Right cardiac atrium (tissue), 5 donors: ENCODE measurements at regions of chr11 and their contacts with region 1.

Region 1: GRCh38 chr11:12043959-12044819 is 35.8 kb upstream of the DKK3 start:
- DNase-seq: peak; percentile 91 to 93 (median 92)
- ATAC-seq: peak; percentile 88
- H3K4me3 ChIP-seq: no peak overlapping the region
- H3K27ac ChIP-seq: peak overlapping the region; percentile 74
- H3K4me1 ChIP-seq: no peaks in the 10 kb centered on the region
- H3K27me3 ChIP-seq: no peaks in the 10 kb centered on the region

Region 2: DNA sequence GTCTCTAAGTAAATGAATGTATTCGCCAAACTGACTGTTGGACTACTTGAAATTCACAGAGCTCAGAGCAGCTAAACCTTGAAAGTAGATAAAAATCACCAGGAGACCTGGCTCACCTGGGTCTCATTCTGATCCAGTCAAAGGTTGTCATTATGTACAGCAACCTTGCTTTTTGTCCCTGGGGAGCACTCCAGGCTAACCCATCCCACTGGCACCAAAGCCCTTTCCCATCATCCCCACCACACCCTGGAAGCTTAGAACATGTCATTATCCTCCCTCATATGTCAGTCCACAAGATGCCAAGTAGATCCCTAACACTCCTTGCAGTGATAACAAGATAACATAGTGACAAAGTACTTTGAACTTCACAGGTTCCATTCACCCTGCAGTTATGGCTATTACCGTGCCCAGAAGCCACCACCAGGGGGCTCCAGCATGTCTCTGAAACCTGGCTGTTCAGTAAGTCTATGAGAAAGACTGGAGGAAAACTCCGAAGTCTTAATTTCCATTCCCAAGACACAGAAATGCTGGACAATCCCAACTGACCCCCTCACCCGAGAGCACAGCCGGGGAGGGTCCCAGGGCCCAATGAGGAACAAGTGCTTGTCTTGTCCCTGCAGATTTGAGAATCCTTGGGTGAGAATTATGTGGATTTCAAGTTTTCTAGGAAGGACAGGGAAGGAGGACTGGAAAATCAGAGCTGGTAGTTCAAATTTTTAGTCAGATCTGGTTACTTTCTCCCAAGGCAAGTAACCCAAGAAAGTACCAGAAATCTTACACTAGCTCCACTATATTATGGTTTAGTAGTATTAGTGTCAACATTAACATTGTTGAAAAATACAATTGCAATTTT is 245.4 kb before region 1 on chr11:
- intact Hi-C with region 1: loop called in 3 of 4 experiments (anchors 5 to 10 kb)
- DNase-seq: peak; percentile 85 to 95 (median 91)
- ATAC-seq: peak; percentile 91 to 92
- H3K4me3 ChIP-seq: no peak overlapping the region
- H3K27ac ChIP-seq: no peak overlapping the region
- H3K4me1 ChIP-seq: no peaks in the 10 kb centered on the region
- H3K27me3 ChIP-seq: no peaks in the 10 kb centered on the region

Region 3: GRCh38 chr11:11931461-11932055 is 112.6 kb before region 1 on chr11:
- intact Hi-C with region 1: loop called (anchors 2 to 10 kb)
- DNase-seq: no peak
- ATAC-seq: peak; percentile 68 to 73
- H3K4me3 ChIP-seq: no peak overlapping the region
- H3K27ac ChIP-seq: no peak overlapping the region
- H3K4me1 ChIP-seq: no peaks in the 10 kb centered on the region
- H3K27me3 ChIP-seq: no peaks in the 10 kb centered on the region

Region 4: DNA sequence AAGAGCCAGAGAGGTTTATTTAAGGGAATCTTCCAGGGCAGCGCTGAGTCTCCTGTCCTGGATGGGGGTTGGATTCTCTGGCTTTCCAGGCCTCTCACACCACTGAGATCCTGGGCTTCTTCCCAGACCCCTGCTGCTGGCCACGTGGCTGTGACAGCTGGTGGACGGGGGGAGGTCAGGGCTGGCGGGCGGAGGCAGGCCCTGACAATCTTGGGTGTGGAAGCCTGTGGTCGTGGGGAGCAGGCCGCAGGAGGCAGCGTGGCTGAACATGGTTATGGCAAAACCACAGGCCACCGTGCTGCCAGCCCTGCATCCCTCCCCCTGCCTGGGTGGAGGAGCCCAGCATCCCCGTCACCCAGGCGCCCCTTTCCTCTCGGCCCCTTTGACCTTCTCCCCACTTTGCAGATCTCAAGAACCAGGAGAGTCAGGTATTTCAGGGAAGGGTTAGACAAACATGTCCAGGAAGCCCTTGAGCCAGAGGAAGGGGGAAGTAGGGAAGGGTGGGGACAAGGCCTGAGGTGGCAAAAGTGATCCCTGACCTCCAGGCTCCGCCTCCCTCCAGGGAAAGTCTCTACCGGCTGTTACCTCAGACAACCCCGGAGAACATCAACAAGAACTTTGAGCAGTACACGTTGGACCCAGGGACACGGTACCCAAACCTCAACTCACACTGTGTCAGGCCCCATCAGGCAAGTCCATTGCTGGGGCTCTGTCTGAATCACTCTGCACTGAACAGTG is 178.0 kb after region 1 on chr11:
- intact Hi-C with region 1: no loop called
- DNase-seq: peak; percentile 65 to 91 (median 90)
- ATAC-seq: peak; percentile 37 to 49
- H3K4me3 ChIP-seq: no peak overlapping the region
- H3K27ac ChIP-seq: peak overlapping the region; percentile 53
- H3K4me1 ChIP-seq: peaks cover 25% of the 10 kb centered on the region
- H3K27me3 ChIP-seq: no peaks in the 10 kb centered on the region